K562 (cell line): ENCODE measurements at regions of chr6 and their contacts with region 1.

Region 1: DNA sequence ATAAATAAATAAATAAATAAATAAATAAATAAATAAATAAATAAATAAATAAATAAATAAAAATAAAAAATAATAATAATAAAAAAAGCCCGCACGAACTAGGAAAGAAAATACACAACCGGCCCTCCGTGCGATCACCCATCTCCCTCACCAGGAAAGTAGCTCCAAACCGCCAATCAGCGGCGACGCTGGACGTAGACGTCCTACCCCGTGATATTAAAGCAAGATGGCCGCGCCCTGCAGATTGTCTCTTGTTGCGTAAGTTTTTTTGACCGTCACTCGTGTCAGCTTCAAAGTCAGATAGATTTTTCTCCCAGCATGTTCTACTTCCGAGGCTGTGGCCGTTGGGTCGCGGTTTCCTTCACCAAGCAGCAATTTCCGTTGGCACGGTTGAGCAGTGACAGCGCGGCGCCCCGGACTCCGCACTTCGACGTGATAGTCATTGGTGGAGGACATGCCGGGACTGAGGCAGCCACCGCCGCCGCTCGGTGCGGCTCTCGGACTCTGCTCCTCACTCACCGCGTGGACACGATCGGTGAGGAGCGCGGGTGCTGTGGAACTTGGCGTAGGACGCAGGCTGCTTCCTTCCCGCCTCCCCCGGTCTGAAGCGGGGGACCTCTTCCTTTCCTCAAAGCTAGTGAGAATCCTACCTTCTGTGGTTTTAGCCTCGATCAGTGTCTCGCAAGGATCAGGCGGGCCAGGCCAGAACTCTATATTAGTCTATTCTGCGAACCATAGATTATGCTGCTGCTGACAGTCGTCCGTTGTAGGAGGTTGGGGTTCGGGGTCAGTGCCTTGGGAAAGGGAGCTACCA is at the start of gene MTO1:
- DNase-seq: peak; percentile 89 to 96 (median 92)
- ATAC-seq: peak; percentile 94
- H3K4me3 ChIP-seq: peak within 1 kb of the TSS; percentile 95
- H3K27ac ChIP-seq: peak within 1 kb of the TSS; percentile 99
- H3K4me1 ChIP-seq: no peaks in the 10 kb centered on the region; a peak in 3 of 5 replicates
- H3K27me3 ChIP-seq: no peaks in the 10 kb centered on the region
- CTCF ChIP-seq: no peak
- EP300 ChIP-seq: 0 out of 2 replicates have a peak, but pooled peaks have one; percentile 12
- POLR2A ChIP-seq: peak; percentile 94
- RAD21 ChIP-seq: 0 out of 4 replicates have a peak, but pooled peaks of 1 of the 2 experiments have one; percentile 9
- polyA plus RNA-seq, gene MTO1: 33.4 to 55.1 TPM

Region 2: GRCh38 chr6:73388800-73389512 is 72.8 kb before region 1 on chr6:
- CTCF ChIA-PET with region 1: no interaction called
- POLR2A ChIA-PET with region 1: interaction called, 21 read pairs
- in situ Hi-C with region 1: no loop called
- intact Hi-C with region 1: loop called (anchors 2 kb)
- DNase-seq: peak; percentile 76 to 93 (median 84)
- ATAC-seq: peak; percentile 97
- H3K4me3 ChIP-seq: peak overlapping the region; percentile 57
- H3K27ac ChIP-seq: peak overlapping the region; percentile 89
- H3K4me1 ChIP-seq: peaks cover 7 to 8% of the 10 kb centered on the region in 2 experiments
- H3K27me3 ChIP-seq: no peaks in the 10 kb centered on the region
- CTCF ChIP-seq: peak; percentile 78 to 82 (median 81)
- EP300 ChIP-seq: peak; percentile 33; the same call in 1 of the 2 replicates
- POLR2A ChIP-seq: peak; percentile 91
- RAD21 ChIP-seq: peak; percentile 58 to 76

Region 3: GRCh38 chr6:73421534-73421933 is 40.2 kb before region 1 on chr6:
- CTCF ChIA-PET with region 1: no interaction called
- POLR2A ChIA-PET with region 1: interaction called, 3 read pairs
- in situ Hi-C with region 1: no loop called
- intact Hi-C with region 1: loop called (anchors 5 kb)
- DNase-seq: peak in 2 of 4 experiments; percentile 28 to 64
- ATAC-seq: peak; percentile 55
- H3K4me3 ChIP-seq: no peak overlapping the region
- H3K27ac ChIP-seq: peak overlapping the region; percentile 80
- H3K4me1 ChIP-seq: peaks cover 12 to 20% of the 10 kb centered on the region in 2 experiments; a peak in 4 of 5 replicates
- H3K27me3 ChIP-seq: no peaks in the 10 kb centered on the region
- CTCF ChIP-seq: no peak
- EP300 ChIP-seq: peak; percentile 46; the same call in 1 of the 2 replicates
- POLR2A ChIP-seq: no peak
- RAD21 ChIP-seq: no peak

Region 4: DNA sequence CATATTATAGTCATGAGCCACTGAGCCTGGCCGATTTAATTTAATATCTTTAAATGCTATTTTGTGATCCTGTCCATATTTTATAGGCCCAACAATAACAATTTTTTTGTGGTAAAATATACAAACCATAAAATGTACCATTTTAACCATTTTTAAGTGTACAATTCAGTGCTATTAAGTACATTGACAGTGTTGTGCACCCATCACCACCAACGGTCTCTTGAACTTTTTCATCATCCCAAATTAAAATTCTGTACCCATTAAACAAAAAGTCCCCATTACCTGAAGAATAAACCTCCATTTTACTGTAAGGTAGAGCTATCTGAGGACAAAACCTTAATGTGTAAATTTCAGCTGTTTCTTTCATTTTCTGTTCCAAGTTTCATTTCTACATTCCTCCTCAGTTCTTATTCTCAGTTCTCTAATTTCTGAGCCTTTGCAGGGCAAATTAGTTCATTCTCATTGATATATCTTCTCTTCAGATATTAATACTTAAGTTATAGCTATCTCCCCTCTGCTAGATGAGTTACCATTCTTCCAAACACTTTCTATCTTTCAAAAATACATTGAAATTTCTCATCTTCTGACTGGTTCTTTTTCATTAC is 10.0 kb after region 1 on chr6:
- CTCF ChIA-PET with region 1: no interaction called
- POLR2A ChIA-PET with region 1: interaction called, 21 read pairs
- in situ Hi-C with region 1: no loop called
- intact Hi-C with region 1: no loop called
- DNase-seq: no peak
- ATAC-seq: no peak
- H3K4me3 ChIP-seq: no peak overlapping the region
- H3K27ac ChIP-seq: no peak overlapping the region
- H3K4me1 ChIP-seq: no peaks in the 10 kb centered on the region
- H3K27me3 ChIP-seq: no peaks in the 10 kb centered on the region
- CTCF ChIP-seq: no peak
- EP300 ChIP-seq: no peak
- POLR2A ChIP-seq: no peak
- RAD21 ChIP-seq: no peak